CD4-positive, alpha-beta T cell (primary cell): ENCODE measurements at regions of chr15 and their contacts with region 1.

Region 1: GRCh38 chr15:69058830-69059556 is 44.5 kb downstream of the NOX5 start:
- DNase-seq: peak; percentile 55 to 88 (median 70)
- ATAC-seq: peak; percentile 51
- H3K4me3 ChIP-seq: no peak overlapping the region
- H3K4me3 Mint-ChIP-seq: no peak overlapping the region
- H3K27ac ChIP-seq: no peak overlapping the region
- H3K27ac Mint-ChIP-seq: peak overlapping the region; percentile 17
- H3K4me1 ChIP-seq: peaks cover 26% of the 10 kb centered on the region
- H3K4me1 Mint-ChIP-seq: peaks cover 29% of the 10 kb centered on the region
- H3K27me3 ChIP-seq: no peaks in the 10 kb centered on the region
- H3K27me3 Mint-ChIP-seq: no peaks in the 10 kb centered on the region
- CTCF ChIP-seq: peak; percentile 92

Region 2: DNA sequence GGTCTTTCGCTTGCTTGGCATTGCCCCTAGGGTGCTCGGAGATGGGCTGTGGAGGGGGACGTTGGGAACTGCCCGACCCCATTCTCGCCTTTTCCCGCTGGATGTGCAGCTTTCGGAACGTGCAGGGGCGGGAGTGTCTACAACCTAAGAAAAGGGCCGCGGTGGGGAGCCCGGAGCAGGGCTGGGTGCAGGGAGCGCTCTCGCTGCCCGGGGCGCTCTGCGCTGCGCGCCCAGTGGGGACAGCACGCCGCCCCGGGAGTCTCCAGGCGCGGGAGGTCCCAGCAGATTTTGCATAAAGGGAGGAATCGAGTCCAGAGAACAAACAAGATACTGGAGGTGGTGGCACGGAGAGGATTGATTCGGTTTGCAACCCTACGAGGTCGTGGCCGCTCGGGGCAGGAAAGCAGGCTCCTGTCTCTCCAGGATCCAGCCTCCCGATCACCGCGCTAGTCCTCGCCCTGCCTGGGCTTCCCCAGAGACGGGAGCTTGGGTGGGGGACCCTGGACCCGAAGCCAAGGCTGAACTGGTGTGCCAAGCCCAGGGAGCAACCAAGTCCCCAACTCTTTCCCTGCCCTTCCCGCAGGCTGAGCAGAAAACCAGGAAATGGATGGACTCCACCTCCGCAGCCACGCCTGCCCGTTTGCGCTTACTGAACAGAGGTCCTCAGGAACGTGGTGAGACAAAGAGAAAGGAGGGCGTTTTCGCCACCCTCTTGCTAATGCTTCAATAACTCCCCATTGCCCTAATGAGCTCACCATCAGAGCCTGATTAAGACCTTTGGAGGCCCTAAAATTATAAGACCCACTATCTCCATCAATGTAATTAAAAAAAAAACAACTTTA is 15.2 kb after region 1 on chr15:
- CTCF ChIA-PET with region 1: no interaction called
- POLR2A ChIA-PET with region 1: no interaction called
- intact Hi-C with region 1: no loop called
- DNase-seq: no peak
- ATAC-seq: no peak
- H3K4me3 ChIP-seq: peak overlapping the region; percentile 26
- H3K4me3 Mint-ChIP-seq: peak overlapping the region; percentile 4
- H3K27ac ChIP-seq: no peak overlapping the region
- H3K27ac Mint-ChIP-seq: no peak overlapping the region
- H3K4me1 ChIP-seq: peaks cover 10% of the 10 kb centered on the region
- H3K4me1 Mint-ChIP-seq: peaks cover 7% of the 10 kb centered on the region
- H3K27me3 ChIP-seq: peaks cover 20 to 25% of the 10 kb centered on the region in 2 experiments
- H3K27me3 Mint-ChIP-seq: peaks cover 63% of the 10 kb centered on the region
- CTCF ChIP-seq: no peak

Region 3: GRCh38 chr15:69225355-69226025 is 166.5 kb after region 1 on chr15:
- CTCF ChIA-PET with region 1: no interaction called
- POLR2A ChIA-PET with region 1: no interaction called
- intact Hi-C with region 1: loop called (anchors 1 kb)
- DNase-seq: peak in 3 of 14 experiments; percentile 8 to 10 (median 9)
- ATAC-seq: no peak
- H3K4me3 ChIP-seq: no peak overlapping the region
- H3K4me3 Mint-ChIP-seq: no peak overlapping the region
- H3K27ac ChIP-seq: no peak overlapping the region
- H3K27ac Mint-ChIP-seq: no peak overlapping the region
- H3K4me1 ChIP-seq: no peaks in the 10 kb centered on the region
- H3K4me1 Mint-ChIP-seq: no peaks in the 10 kb centered on the region
- H3K27me3 ChIP-seq: no peaks in the 10 kb centered on the region
- H3K27me3 Mint-ChIP-seq: no peaks in the 10 kb centered on the region
- CTCF ChIP-seq: no peak

Region 4: GRCh38 chr15:69265347-69265955 is 206.5 kb after region 1 on chr15:
- CTCF ChIA-PET with region 1: no interaction called
- POLR2A ChIA-PET with region 1: no interaction called
- intact Hi-C with region 1: loop called in 1 of 2 experiments (anchors 1 kb)
- DNase-seq: peak in 3 of 14 experiments; percentile 33 to 38 (median 36)
- ATAC-seq: no peak
- H3K4me3 ChIP-seq: no peak overlapping the region
- H3K4me3 Mint-ChIP-seq: no peak overlapping the region
- H3K27ac ChIP-seq: no peak overlapping the region
- H3K27ac Mint-ChIP-seq: no peak overlapping the region
- H3K4me1 ChIP-seq: no peaks in the 10 kb centered on the region
- H3K4me1 Mint-ChIP-seq: no peaks in the 10 kb centered on the region
- H3K27me3 ChIP-seq: no peaks in the 10 kb centered on the region
- H3K27me3 Mint-ChIP-seq: no peaks in the 10 kb centered on the region
- CTCF ChIP-seq: peak; percentile 57

Region 5: DNA sequence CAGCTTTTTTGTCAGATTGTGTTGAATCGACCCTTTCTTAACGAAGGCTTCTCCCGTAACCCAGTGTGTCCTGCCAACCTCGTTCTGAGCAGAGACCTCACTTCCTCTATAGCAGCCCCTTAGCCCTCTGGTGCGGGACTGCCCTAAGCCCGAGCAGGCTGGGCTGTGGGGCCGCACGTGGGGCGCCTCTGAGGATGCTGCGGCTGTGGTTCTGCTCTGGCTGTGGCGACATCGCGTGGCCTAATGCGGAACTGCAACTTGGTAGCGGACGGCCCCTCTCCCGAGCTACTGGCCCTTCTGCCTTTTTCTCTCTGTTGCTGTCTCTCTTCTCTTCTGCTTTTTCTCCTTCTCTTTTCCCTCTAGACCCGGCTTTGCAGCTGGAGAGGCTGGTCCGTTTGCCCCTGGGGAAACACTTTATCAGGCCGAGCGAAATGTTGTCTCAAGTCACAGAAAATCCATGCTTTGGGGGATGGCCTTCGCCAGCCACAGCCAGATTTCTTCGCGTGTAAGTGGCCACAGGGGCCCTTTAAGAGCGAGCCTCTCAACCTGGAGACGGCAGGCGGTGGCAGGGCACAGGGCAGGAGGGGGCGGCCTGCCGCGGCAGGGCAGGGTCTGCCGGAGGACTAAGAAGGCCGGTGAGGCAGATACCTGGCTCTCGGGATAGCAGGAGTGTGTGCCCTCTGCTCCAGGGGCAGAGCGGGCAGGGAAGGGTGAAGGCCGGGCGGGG is 335.7 kb after region 1 on chr15:
- CTCF ChIA-PET with region 1: interaction called, 9 read pairs
- POLR2A ChIA-PET with region 1: no interaction called
- intact Hi-C with region 1: loop called (anchors 1 kb)
- DNase-seq: peak; percentile 58 to 88 (median 82)
- ATAC-seq: peak; percentile 95
- H3K4me3 ChIP-seq: no peak overlapping the region
- H3K4me3 Mint-ChIP-seq: no peak overlapping the region
- H3K27ac ChIP-seq: no peak overlapping the region
- H3K27ac Mint-ChIP-seq: no peak overlapping the region
- H3K4me1 ChIP-seq: peaks cover 11% of the 10 kb centered on the region
- H3K4me1 Mint-ChIP-seq: peaks cover 8% of the 10 kb centered on the region
- H3K27me3 ChIP-seq: no peaks in the 10 kb centered on the region
- H3K27me3 Mint-ChIP-seq: no peaks in the 10 kb centered on the region
- CTCF ChIP-seq: peak; percentile 96

Region 6: GRCh38 chr15:70815644-70816043 is 1756.7 kb after region 1 on chr15:
- CTCF ChIA-PET with region 1: no interaction called
- POLR2A ChIA-PET with region 1: no interaction called
- intact Hi-C with region 1: loop called in 1 of 2 experiments (anchors 10 kb)
- DNase-seq: no peak
- ATAC-seq: no peak
- H3K4me3 ChIP-seq: no peak overlapping the region
- H3K4me3 Mint-ChIP-seq: no peak overlapping the region
- H3K27ac ChIP-seq: no peak overlapping the region
- H3K27ac Mint-ChIP-seq: no peak overlapping the region
- H3K4me1 ChIP-seq: no peaks in the 10 kb centered on the region
- H3K4me1 Mint-ChIP-seq: no peaks in the 10 kb centered on the region
- H3K27me3 ChIP-seq: peaks cover 3 to 4% of the 10 kb centered on the region in 2 experiments
- H3K27me3 Mint-ChIP-seq: peaks cover 6% of the 10 kb centered on the region
- CTCF ChIP-seq: no peak